MCF 10A (cell line): ENCODE measurements at regions of chr2 and their contacts with region 1.

Region 1: GRCh38 chr2:149597668-149598326 is 10.2 kb upstream of the MMADHC start:
- DNase-seq: peak; percentile 79
- H3K4me3 Mint-ChIP-seq: no peak overlapping the region
- H3K27ac Mint-ChIP-seq: no peak overlapping the region
- H3K4me1 Mint-ChIP-seq: peaks cover 12% of the 10 kb centered on the region
- H3K27me3 Mint-ChIP-seq: no peaks in the 10 kb centered on the region
- CTCF ChIP-seq: peak; percentile 57

Region 2: GRCh38 chr2:148716378-148716920 is 881.3 kb before region 1 on chr2:
- CTCF ChIA-PET with region 1: no interaction called
- POLR2A ChIA-PET with region 1: no interaction called
- intact Hi-C with region 1: no loop called
- DNase-seq: no peak
- H3K4me3 Mint-ChIP-seq: no peak overlapping the region
- H3K27ac Mint-ChIP-seq: no peak overlapping the region
- H3K4me1 Mint-ChIP-seq: peaks cover 3% of the 10 kb centered on the region
- H3K27me3 Mint-ChIP-seq: no peaks in the 10 kb centered on the region
- CTCF ChIP-seq: no peak

Region 3: DNA sequence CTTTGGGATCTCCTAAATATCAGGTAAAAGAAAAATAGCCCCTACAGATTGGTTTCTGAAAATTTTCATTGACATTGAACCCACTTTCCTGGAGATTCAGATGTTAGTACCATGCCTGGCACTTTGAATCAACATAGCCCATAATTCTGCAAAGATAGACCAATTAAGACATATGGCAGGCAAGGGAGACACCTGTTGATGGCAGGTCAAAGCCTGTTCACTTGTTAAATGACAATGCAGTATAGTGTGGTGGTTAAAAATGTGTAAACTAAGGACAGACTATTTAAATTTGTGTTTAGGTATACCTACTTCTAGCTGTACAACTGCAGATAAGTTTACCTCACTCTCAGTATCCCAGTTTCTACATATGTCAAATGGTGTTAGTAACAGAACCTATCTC is 167.8 kb after region 1 on chr2:
- CTCF ChIA-PET with region 1: interaction called, 3 read pairs
- POLR2A ChIA-PET with region 1: no interaction called
- intact Hi-C with region 1: loop called (anchors 1 kb)
- DNase-seq: no peak
- H3K4me3 Mint-ChIP-seq: no peak overlapping the region
- H3K27ac Mint-ChIP-seq: no peak overlapping the region
- H3K4me1 Mint-ChIP-seq: peaks cover 27% of the 10 kb centered on the region
- H3K27me3 Mint-ChIP-seq: no peaks in the 10 kb centered on the region
- CTCF ChIP-seq: no peak

Region 4: DNA sequence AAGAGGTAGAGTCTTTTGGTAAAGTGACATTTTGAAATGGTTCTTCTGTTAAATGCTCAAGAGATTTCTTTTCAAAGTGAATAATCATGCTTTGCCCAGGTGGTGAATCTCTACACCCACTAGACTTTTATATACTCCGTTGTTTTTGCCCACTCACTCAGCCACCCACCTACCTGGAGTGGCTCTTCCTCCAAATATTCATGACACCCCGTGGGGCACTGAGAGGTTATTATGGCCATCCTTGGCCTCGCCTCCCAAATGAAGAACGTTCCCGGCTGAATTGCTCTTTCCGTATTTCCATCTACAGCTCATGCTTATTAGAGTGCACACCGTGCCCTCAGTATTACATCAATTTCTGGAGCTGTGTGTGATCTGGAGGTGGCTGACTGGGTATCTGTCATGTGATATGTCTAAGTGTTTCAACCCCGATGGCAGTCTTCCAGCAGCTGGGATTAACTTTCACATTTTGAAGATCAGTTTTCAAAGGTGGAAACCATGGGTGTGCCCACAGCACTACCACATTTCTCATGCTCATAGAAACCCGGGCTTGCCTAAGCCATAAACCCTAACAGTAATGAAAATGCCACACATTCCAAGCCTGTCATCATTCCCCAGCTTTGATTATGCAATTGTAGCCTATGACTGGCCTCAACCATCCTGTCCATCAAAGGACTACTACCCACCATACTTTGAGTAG is 396.4 kb after region 1 on chr2:
- CTCF ChIA-PET with region 1: no interaction called
- POLR2A ChIA-PET with region 1: no interaction called
- intact Hi-C with region 1: loop called (anchors 10 kb)
- DNase-seq: peak; percentile 98
- H3K4me3 Mint-ChIP-seq: peak overlapping the region; percentile 32
- H3K27ac Mint-ChIP-seq: peak overlapping the region; percentile 78
- H3K4me1 Mint-ChIP-seq: peaks cover 29% of the 10 kb centered on the region
- H3K27me3 Mint-ChIP-seq: no peaks in the 10 kb centered on the region
- CTCF ChIP-seq: no peak

Region 5: GRCh38 chr2:150191349-150191748 is 593.6 kb after region 1 on chr2:
- CTCF ChIA-PET with region 1: no interaction called
- POLR2A ChIA-PET with region 1: no interaction called
- intact Hi-C with region 1: no loop called
- DNase-seq: peak; percentile 61
- H3K4me3 Mint-ChIP-seq: no peak overlapping the region
- H3K27ac Mint-ChIP-seq: peak overlapping the region; percentile 33
- H3K4me1 Mint-ChIP-seq: peaks cover 20% of the 10 kb centered on the region
- H3K27me3 Mint-ChIP-seq: no peaks in the 10 kb centered on the region
- CTCF ChIP-seq: no peak

Region 6: GRCh38 chr2:150610671-150611279 is 1013.0 kb after region 1 on chr2:
- CTCF ChIA-PET with region 1: interaction called, 9 read pairs
- POLR2A ChIA-PET with region 1: no interaction called
- intact Hi-C with region 1: loop called (anchors 1 kb)
- DNase-seq: peak; percentile 74
- H3K4me3 Mint-ChIP-seq: no peak overlapping the region
- H3K27ac Mint-ChIP-seq: no peak overlapping the region
- H3K4me1 Mint-ChIP-seq: peaks cover 10% of the 10 kb centered on the region
- H3K27me3 Mint-ChIP-seq: no peaks in the 10 kb centered on the region
- CTCF ChIP-seq: peak; percentile 82

Region 7: DNA sequence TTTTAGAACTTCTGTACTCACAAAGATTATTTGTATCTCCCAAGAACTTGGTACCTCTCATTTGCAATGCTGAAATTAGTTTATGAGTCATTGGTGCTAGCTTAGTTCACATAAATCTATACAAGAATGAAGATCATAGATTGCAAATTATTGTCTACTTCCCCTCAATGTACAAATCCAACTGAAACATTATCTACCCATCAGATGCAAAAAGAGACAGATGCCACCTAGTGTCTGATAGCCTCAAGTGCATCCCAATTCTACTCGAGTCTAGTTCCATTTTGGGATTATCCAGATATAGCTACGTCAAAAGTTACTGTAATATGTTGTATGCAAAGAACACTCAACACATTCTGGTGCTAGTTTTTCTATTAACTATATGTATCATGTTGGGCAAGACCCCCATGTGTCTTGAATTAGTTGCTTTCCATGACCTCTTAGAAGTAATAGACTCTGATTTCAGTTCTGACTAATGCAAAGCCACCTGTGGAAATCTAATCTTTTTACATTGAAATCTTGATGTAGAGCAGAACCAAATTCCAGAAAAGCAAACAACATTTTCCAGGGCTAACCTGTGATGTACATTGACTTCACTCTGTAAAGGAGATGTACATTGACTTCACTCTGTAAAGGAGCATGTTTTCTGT is 1453.9 kb after region 1 on chr2:
- CTCF ChIA-PET with region 1: interaction called, 10 read pairs
- POLR2A ChIA-PET with region 1: no interaction called
- intact Hi-C with region 1: loop called (anchors 1 kb)
- DNase-seq: peak; percentile 73
- H3K4me3 Mint-ChIP-seq: no peak overlapping the region
- H3K27ac Mint-ChIP-seq: no peak overlapping the region
- H3K4me1 Mint-ChIP-seq: peaks cover 16% of the 10 kb centered on the region
- H3K27me3 Mint-ChIP-seq: no peaks in the 10 kb centered on the region
- CTCF ChIP-seq: peak; percentile 76